ENCODE measurements at regions of chr11 and their contacts with region 1.

Region 1: DNA sequence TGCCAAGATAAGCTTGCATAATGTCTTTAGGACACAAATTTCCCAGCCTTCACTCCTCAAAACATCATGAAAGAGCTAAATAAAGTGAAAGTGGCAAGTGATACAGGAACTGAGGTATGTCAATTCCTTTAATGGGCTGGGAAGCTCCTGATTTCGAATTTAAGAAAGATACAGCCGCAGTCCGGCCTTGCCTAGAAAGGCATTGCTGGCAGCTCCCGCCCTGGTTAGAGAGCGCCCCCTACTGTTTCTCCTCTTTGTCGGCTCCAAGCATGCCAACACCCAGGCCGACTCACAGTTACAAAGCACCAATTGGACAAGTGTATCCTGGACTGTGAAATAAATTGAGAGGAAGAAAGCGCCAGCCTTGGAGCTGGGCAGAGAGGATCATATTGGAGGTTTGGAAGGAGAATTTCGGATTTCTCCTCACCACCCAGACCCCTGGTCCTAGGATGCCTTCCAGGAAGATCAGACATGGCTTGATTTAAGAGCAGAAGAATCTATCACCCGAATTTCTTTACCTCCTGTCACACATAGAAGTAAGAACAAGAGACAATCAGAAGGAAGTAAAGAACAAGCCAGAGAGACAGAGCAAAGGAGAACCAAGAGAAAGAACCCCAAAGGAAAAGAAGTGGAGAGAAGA is 84.0 kb downstream of the FAM76B start:
- DNase-seq: peak; percentile 91
- ATAC-seq: peak; percentile 83
- H3K4me3 Mint-ChIP-seq: no peak overlapping the region
- H3K27ac Mint-ChIP-seq: no peak overlapping the region
- H3K4me1 Mint-ChIP-seq: peaks cover 9% of the 10 kb centered on the region
- H3K27me3 Mint-ChIP-seq: peaks cover 5% of the 10 kb centered on the region
- CTCF ChIP-seq: peak; percentile 86

Region 2: GRCh38 chr11:95067039-95067840 is 638.4 kb before region 1 on chr11:
- CTCF ChIA-PET with region 1: interaction called, 10 read pairs
- POLR2A ChIA-PET with region 1: interaction called, 3 read pairs
- intact Hi-C with region 1: loop called (anchors 10 kb)
- DNase-seq: peak; percentile 78
- ATAC-seq: peak; percentile 64
- H3K4me3 Mint-ChIP-seq: peak overlapping the region; percentile 100
- H3K27ac Mint-ChIP-seq: peak overlapping the region; percentile 98
- H3K4me1 Mint-ChIP-seq: peaks cover 22% of the 10 kb centered on the region
- H3K27me3 Mint-ChIP-seq: no peaks in the 10 kb centered on the region
- CTCF ChIP-seq: peak; percentile 41

Region 3: DNA sequence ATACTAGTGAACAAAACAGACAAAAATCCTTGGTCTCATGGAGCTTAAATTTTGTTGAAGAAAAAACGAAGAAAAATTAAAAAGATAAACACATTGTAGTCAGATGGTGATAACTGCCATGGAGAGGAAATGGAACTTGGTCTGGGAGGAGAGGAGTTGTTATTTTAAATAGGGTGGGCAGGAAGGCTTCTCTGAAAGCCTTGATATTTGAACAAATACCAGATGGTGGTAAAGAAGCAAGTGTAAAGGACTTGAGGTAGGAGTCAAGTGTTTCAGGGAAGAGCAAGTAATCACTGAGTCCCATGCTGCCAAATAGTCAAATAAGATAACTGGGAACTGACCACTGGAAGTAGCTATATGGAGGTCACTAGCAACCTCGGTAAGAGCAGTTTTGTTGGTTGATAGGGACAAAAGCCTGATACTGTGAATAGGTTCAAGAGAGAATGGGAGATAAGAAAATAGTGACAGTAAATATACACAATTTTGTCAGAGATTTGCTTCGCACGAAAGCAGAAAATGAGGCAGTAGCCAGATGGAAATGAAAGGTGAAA is 529.7 kb before region 1 on chr11:
- CTCF ChIA-PET with region 1: interaction called, 10 read pairs
- POLR2A ChIA-PET with region 1: no interaction called
- intact Hi-C with region 1: no loop called
- DNase-seq: no peak
- ATAC-seq: no peak
- H3K4me3 Mint-ChIP-seq: no peak overlapping the region
- H3K27ac Mint-ChIP-seq: no peak overlapping the region
- H3K4me1 Mint-ChIP-seq: no peaks in the 10 kb centered on the region
- H3K27me3 Mint-ChIP-seq: no peaks in the 10 kb centered on the region
- CTCF ChIP-seq: no peak

Region 4: DNA sequence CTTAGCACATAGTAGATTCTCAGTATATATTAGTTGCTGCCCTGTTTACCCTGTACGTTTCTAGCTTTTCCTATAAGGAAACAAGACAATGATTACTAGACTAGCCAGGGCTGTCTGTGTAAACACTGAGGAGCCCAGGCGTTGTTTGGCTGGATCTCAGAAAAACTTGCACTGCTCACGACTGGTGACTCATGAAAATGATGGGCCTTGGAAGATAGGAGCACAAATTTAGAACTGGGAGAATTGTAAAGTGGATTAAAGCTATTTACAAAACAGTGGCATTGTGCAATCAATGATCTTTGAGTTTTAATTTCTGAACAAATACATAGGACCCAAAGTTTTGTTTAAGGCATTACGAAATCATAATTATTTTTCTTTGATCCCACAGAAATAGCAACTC is 192.9 kb before region 1 on chr11:
- CTCF ChIA-PET with region 1: interaction called, 16 read pairs
- POLR2A ChIA-PET with region 1: no interaction called
- intact Hi-C with region 1: no loop called
- DNase-seq: no peak
- ATAC-seq: no peak
- H3K4me3 Mint-ChIP-seq: no peak overlapping the region
- H3K27ac Mint-ChIP-seq: no peak overlapping the region
- H3K4me1 Mint-ChIP-seq: no peaks in the 10 kb centered on the region
- H3K27me3 Mint-ChIP-seq: no peaks in the 10 kb centered on the region
- CTCF ChIP-seq: no peak

Region 5: DNA sequence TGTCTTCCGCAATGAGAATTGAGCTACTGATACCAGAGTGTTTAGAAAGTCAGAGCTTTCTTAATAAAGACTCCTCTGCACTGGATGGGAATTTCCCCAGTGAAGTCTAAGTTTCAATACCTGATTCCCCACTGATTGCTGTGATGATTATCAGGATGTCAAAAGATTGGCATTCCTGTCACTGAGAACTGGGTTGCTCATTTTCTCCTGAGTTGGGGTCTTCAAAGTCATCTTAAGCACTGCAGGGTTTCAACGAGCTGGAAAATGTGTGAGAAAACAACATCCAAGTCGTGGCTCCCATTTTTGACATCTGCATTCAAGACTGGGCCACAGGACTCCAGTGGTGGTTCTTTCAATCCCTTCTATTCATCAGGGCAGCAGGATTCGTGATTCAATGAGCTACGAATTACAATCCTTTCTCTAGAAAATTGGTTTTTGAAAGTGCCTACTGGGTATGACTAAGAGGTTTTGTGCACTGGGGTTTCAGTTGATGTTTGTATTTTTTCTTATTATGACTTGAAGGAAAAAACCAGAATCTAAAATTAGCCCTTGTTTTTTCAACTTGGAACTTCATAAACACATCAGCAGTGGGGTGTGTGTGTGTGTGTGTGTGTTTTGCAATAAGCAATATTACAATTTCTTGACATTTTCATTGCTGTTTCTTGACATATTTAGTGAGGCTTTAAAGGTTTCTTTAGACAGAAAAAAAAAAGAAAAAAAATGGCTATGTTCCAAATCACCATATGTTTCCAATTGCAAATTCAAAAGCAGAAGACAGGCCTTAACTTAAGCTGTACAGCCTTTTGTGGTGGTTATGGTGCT is 149.1 kb before region 1 on chr11:
- CTCF ChIA-PET with region 1: interaction called, 33 read pairs
- POLR2A ChIA-PET with region 1: no interaction called
- intact Hi-C with region 1: loop called (anchors 5 kb)
- DNase-seq: peak; percentile 41
- ATAC-seq: peak; percentile 87
- H3K4me3 Mint-ChIP-seq: no peak overlapping the region
- H3K27ac Mint-ChIP-seq: peak overlapping the region; percentile 83
- H3K4me1 Mint-ChIP-seq: peaks cover 24% of the 10 kb centered on the region
- H3K27me3 Mint-ChIP-seq: no peaks in the 10 kb centered on the region
- CTCF ChIP-seq: no peak

Region 6: DNA sequence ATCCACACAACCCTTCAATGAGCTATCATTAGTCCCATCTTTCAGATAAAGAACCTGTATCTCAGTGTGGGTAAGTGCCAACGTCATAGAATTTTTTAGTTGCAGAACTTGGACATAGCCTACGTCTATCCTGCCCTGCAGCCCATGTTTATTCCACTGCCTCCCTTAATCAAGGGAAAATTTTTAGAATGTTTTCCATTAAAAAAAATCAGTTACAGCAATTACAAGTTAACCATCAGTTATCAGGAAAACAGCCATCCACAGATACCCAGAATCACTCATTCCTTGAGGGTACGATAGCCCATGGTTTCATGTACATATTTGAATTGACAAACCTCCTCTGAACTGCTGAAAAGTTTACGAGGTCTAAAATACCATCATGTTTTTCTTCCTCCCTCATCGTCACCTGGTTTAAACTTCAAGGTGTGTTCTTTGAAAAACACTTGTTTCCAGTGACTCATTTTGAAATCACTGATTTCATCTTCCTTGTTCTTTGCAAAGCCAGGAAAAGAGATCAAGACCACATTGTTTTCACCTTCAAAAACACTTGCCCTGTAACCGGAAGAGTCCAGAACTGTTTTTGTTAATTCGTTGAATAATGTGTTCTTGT is 16.9 kb before region 1 on chr11:
- CTCF ChIA-PET with region 1: interaction called, 25 read pairs
- POLR2A ChIA-PET with region 1: interaction called, 18 read pairs
- intact Hi-C with region 1: no loop called
- DNase-seq: no peak
- ATAC-seq: peak; percentile 77
- H3K4me3 Mint-ChIP-seq: no peak overlapping the region
- H3K27ac Mint-ChIP-seq: no peak overlapping the region
- H3K4me1 Mint-ChIP-seq: peaks cover 23% of the 10 kb centered on the region
- H3K27me3 Mint-ChIP-seq: no peaks in the 10 kb centered on the region
- CTCF ChIP-seq: no peak

Region 7: GRCh38 chr11:95764267-95764898 is 58.8 kb after region 1 on chr11:
- CTCF ChIA-PET with region 1: interaction called, 19 read pairs
- POLR2A ChIA-PET with region 1: no interaction called
- intact Hi-C with region 1: no loop called
- DNase-seq: no peak
- ATAC-seq: peak; percentile 84
- H3K4me3 Mint-ChIP-seq: no peak overlapping the region
- H3K27ac Mint-ChIP-seq: no peak overlapping the region
- H3K4me1 Mint-ChIP-seq: no peaks in the 10 kb centered on the region
- H3K27me3 Mint-ChIP-seq: peaks cover 3% of the 10 kb centered on the region
- CTCF ChIP-seq: peak; percentile 76

Region 8: GRCh38 chr11:95805869-95806268 is 100.3 kb after region 1 on chr11:
- CTCF ChIA-PET with region 1: no interaction called
- POLR2A ChIA-PET with region 1: no interaction called
- intact Hi-C with region 1: no loop called
- DNase-seq: no peak
- ATAC-seq: no peak
- H3K4me3 Mint-ChIP-seq: no peak overlapping the region
- H3K27ac Mint-ChIP-seq: no peak overlapping the region
- H3K4me1 Mint-ChIP-seq: no peaks in the 10 kb centered on the region
- H3K27me3 Mint-ChIP-seq: no peaks in the 10 kb centered on the region
- CTCF ChIP-seq: no peak